IMR-90 (cell line): ENCODE measurements at regions of chr20 and their contacts with region 1.

Region 1: DNA sequence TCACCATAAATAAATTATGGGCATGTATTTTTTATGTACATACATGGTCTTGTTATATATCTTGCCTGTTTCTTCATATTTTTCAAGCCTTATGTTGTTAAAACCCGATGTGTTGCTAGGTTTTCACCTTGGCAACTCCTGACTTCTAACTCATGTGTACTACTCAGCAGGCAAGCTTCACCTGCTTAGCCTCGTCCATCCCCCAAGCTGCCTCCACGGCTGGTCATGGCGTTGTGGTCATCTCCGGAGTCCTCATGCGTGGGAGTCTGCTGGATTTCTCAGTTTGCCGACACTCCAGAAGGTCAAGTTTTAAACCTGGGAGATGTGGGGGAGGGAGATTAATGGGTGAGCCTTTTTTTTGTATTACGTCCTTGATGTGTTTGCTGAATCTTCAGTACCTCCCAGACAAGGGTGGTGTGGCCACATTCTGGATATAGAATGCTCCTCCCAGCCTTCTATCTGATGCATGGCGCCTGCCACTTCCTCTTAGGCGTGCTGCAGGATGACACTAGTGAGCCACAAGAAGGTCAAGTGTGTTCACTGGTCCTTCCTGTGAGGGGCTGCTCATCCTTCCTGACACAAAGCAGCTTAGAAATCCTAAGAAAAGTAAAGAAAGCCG is 26.6 kb upstream of the EDN3 start:
- DNase-seq: no peak
- ATAC-seq: no peak
- H3K4me3 ChIP-seq: no peak overlapping the region
- H3K27ac ChIP-seq: no peak overlapping the region
- H3K4me1 ChIP-seq: no peaks in the 10 kb centered on the region
- H3K27me3 ChIP-seq: no peaks in the 10 kb centered on the region; the same call in 1 of the 2 replicates
- CTCF ChIP-seq: no peak
- POLR2A ChIP-seq: no peak
- RAD21 ChIP-seq: no peak

Region 2: GRCh38 chr20:58976061-58977028 is 297.5 kb before region 1 on chr20:
- CTCF ChIA-PET with region 1: no interaction called
- POLR2A ChIA-PET with region 1: no interaction called
- dilution Hi-C with region 1: no loop called
- in situ Hi-C with region 1: no loop called
- intact Hi-C with region 1: no loop called
- DNase-seq: peak; percentile 6
- ATAC-seq: no peak
- H3K4me3 ChIP-seq: no peak overlapping the region
- H3K27ac ChIP-seq: no peak overlapping the region
- H3K4me1 ChIP-seq: no peaks in the 10 kb centered on the region
- H3K27me3 ChIP-seq: peaks cover 4% of the 10 kb centered on the region
- CTCF ChIP-seq: no peak
- POLR2A ChIP-seq: no peak
- RAD21 ChIP-seq: no peak

Region 3: GRCh38 chr20:59231124-59231804 is 42.6 kb before region 1 on chr20:
- CTCF ChIA-PET with region 1: no interaction called
- POLR2A ChIA-PET with region 1: no interaction called
- dilution Hi-C with region 1: no loop called
- in situ Hi-C with region 1: no loop called
- intact Hi-C with region 1: loop called (anchors 1 kb)
- DNase-seq: no peak
- ATAC-seq: no peak
- H3K4me3 ChIP-seq: no peak overlapping the region
- H3K27ac ChIP-seq: no peak overlapping the region
- H3K4me1 ChIP-seq: no peaks in the 10 kb centered on the region
- H3K27me3 ChIP-seq: peaks cover 4% of the 10 kb centered on the region; the same call in 1 of the 2 replicates
- CTCF ChIP-seq: no peak
- POLR2A ChIP-seq: no peak
- RAD21 ChIP-seq: no peak